ENCODE measurements at regions of chr16 and their contacts with region 1.

Region 1: DNA sequence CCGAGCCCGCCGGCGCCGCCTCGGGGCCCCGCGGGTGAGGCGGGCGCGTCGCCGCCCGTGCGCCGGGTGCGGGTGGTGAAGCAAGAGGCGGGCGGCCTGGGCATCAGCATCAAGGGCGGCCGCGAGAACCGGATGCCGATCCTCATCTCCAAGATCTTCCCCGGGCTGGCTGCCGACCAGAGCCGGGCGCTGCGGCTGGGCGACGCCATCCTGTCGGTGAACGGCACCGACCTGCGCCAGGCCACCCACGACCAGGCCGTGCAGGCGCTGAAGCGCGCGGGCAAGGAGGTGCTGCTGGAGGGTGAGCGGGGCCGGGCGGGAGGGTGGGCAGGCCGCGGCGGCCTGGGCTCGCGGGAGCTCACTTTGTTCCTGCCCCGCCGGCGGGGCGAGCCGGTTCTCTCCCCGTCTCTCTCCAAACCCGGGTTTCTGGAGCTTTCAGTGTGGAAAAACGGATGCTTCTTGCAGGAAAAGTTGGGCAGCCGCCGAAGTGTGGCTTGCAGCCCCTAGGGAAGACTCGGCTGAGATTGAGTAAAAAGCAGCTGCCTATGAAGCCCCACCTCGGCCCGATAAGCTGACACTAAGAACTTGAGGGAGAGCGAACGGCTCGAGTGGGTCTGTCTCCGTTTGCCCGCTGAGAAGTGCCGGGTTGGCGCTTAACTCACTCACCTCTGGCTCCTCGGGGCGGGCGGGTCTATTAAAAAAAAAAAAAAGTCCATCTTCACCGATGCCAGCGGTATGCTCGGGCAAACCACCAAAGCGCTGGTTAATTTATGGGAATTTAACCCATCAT is 677 bp downstream of the SNTB2 start:
- DNase-seq: peak; percentile 42 to 65 (median 58)
- H3K4me3 ChIP-seq: peak overlapping the region; percentile 93
- H3K27ac ChIP-seq: peak overlapping the region; percentile 72 to 76
- H3K4me1 ChIP-seq: peaks cover 9% of the 10 kb centered on the region
- H3K27me3 ChIP-seq: no peaks in the 10 kb centered on the region
- CTCF ChIP-seq: no peak
- EP300 ChIP-seq: no peak
- POLR2A ChIP-seq: no peak

Region 2: DNA sequence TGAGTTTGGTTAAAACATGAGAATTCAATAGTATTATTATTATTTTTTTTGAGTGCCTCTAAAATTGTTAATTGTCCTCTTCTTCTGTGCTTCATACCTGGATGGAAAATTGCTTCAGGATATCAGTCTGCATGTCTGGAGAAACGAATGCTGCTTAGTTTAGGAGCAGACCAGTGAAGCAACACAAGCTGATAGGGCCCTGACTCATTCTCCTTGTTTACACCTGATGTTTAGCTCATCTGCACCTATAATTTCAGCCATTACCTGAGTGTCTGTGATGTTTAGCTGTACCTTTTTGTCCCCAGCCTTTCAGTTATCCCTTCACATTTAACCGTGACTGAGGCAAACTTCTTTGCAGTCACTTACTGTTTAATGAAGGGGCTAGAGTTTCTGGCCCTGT is 14.1 kb after region 1 on chr16:
- intact Hi-C with region 1: loop called in 1 of 4 experiments (anchors 2 kb)
- DNase-seq: no peak
- H3K4me3 ChIP-seq: no peak overlapping the region
- H3K27ac ChIP-seq: peak overlapping the region in 1 of 2 donors; percentile 23
- H3K4me1 ChIP-seq: peaks cover 12% of the 10 kb centered on the region
- H3K27me3 ChIP-seq: no peaks in the 10 kb centered on the region
- CTCF ChIP-seq: no peak
- EP300 ChIP-seq: no peak
- POLR2A ChIP-seq: no peak

Region 3: GRCh38 chr16:69239851-69240250 is 52.2 kb after region 1 on chr16:
- intact Hi-C with region 1: loop called in 1 of 4 experiments (anchors 5 kb)
- DNase-seq: no peak
- H3K4me3 ChIP-seq: no peak overlapping the region
- H3K27ac ChIP-seq: no peak overlapping the region
- H3K4me1 ChIP-seq: peaks cover 18% of the 10 kb centered on the region
- H3K27me3 ChIP-seq: no peaks in the 10 kb centered on the region
- CTCF ChIP-seq: no peak
- EP300 ChIP-seq: no peak
- POLR2A ChIP-seq: no peak

Region 4: DNA sequence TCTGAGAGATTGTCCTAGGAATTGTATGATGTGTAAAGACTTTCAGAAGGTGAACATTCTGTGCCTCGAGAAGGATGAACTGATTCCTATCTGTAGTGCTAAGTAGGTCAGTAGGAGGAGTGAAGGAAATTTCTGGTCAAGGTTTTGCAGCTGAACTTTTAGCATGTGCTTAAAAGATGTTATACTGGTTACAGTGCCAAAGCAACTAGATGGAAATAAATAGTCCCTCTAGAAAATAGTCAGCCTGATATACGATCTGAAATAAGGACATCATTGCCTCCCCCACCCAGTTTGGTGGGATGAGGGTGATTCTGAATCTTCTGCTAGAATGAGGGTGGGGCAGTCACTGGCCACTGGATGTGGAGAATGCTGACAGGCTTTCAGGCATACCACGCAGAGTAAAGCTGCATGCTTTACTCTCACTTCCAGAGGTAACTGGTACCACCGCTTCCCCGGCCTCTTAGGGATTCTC is 66.3 kb after region 1 on chr16:
- intact Hi-C with region 1: no loop called
- DNase-seq: no peak
- H3K4me3 ChIP-seq: no peak overlapping the region
- H3K27ac ChIP-seq: no peak overlapping the region
- H3K4me1 ChIP-seq: peaks cover 5% of the 10 kb centered on the region
- H3K27me3 ChIP-seq: no peaks in the 10 kb centered on the region
- CTCF ChIP-seq: no peak
- EP300 ChIP-seq: no peak
- POLR2A ChIP-seq: no peak